MCF 10A (cell line): ENCODE measurements at regions of chr12 and their contacts with region 1.

Region 1: GRCh38 chr12:112937741-112938719 is at the start of gene OAS3:
- DNase-seq: peak; percentile 79
- H3K4me3 Mint-ChIP-seq: peak within 1 kb of the TSS; percentile 79
- H3K27ac Mint-ChIP-seq: peak within 1 kb of the TSS; percentile 62
- H3K4me1 Mint-ChIP-seq: peaks cover 33% of the 10 kb centered on the region
- H3K27me3 Mint-ChIP-seq: no peaks in the 10 kb centered on the region
- CTCF ChIP-seq: no peak
- total RNA-seq, gene OAS3: 5.7 and 6.5 TPM in 2 replicates

Region 2: GRCh38 chr12:112900299-112901145 is 37.5 kb before region 1 on chr12:
- CTCF ChIA-PET with region 1: interaction called, 10 read pairs
- POLR2A ChIA-PET with region 1: interaction called, 74 read pairs
- intact Hi-C with region 1: loop called (anchors 5 kb)
- DNase-seq: peak; percentile 74
- H3K4me3 Mint-ChIP-seq: no peak overlapping the region
- H3K27ac Mint-ChIP-seq: no peak overlapping the region
- H3K4me1 Mint-ChIP-seq: peaks cover 33% of the 10 kb centered on the region
- H3K27me3 Mint-ChIP-seq: peaks cover 28% of the 10 kb centered on the region
- CTCF ChIP-seq: peak; percentile 64

Region 3: DNA sequence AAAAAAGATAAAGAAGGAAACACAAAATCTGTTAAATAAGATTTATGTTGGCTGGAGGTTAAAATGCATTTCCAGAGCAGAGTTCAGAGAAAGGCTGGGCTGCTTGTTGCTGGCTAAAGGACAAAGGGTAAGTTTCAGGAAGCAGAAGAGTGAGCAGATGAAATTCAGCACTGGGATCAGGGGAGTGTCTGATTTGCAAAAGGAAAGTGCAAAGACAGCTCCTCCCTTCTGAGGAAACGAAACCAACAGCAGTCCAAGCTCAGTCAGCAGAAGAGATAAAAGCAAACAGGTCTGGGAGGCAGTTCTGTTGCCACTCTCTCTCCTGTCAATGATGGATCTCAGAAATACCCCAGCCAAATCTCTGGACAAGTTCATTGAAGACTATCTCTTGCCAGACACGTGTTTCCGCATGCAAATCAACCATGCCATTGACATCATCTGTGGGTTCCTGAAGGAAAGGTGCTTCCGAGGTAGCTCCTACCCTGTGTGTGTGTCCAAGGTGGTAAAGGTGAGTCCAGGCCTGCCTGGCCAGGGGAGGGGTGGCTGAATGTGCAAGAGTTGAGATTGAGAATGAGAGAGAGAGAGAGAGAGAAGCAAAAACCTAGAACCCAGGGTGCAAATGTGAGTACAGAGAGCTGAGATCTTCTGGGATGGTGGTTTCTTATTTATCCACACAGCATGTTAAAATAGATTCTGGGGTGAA is 31.2 kb before region 1 on chr12 and contains the start of gene OAS1:
- CTCF ChIA-PET with region 1: interaction called, 7 read pairs
- POLR2A ChIA-PET with region 1: interaction called, 74 read pairs
- intact Hi-C with region 1: loop called (anchors 5 kb)
- DNase-seq: peak; percentile 74
- H3K4me3 Mint-ChIP-seq: peak within 1 kb of the TSS; percentile 73
- H3K27ac Mint-ChIP-seq: peak within 1 kb of the TSS; percentile 72
- H3K4me1 Mint-ChIP-seq: peaks cover 44% of the 10 kb centered on the region
- H3K27me3 Mint-ChIP-seq: no peaks in the 10 kb centered on the region
- CTCF ChIP-seq: no peak
- total RNA-seq, gene OAS1: 1.3 and 1.5 TPM in 2 replicates

Region 4: GRCh38 chr12:112916270-112916669 is 21.8 kb before region 1 on chr12:
- CTCF ChIA-PET with region 1: interaction called, 5 read pairs
- POLR2A ChIA-PET with region 1: interaction called, 47 read pairs
- intact Hi-C with region 1: loop called (anchors 1 kb)
- DNase-seq: peak; percentile 99
- H3K4me3 Mint-ChIP-seq: no peak overlapping the region
- H3K27ac Mint-ChIP-seq: peak overlapping the region; percentile 60
- H3K4me1 Mint-ChIP-seq: peaks cover 13% of the 10 kb centered on the region
- H3K27me3 Mint-ChIP-seq: no peaks in the 10 kb centered on the region
- CTCF ChIP-seq: no peak

Region 5: DNA sequence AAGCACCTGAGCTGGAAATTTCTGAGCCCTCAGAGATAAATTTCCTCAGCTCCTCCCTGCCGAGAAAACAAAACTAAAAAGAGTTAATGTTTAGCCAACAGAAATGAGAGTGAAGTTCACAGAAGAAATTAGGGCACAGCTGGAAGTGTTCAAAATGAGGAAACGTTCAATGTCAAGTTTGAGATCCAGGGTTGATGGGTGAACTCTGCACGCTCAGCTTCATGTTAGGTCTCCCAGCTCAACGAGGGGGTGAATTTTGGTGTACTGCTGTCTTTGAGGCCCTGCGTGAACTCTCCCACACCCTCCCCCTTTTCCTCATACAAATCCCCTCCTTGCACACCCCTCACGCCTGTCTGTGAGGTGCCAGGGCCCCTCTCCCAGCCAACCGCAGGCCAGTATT is 13.0 kb before region 1 on chr12:
- CTCF ChIA-PET with region 1: interaction called, 4 read pairs
- POLR2A ChIA-PET with region 1: interaction called, 4 read pairs
- intact Hi-C with region 1: loop called (anchors 1 kb)
- DNase-seq: no peak
- H3K4me3 Mint-ChIP-seq: no peak overlapping the region
- H3K27ac Mint-ChIP-seq: no peak overlapping the region
- H3K4me1 Mint-ChIP-seq: no peaks in the 10 kb centered on the region
- H3K27me3 Mint-ChIP-seq: no peaks in the 10 kb centered on the region
- CTCF ChIP-seq: no peak

Region 6: DNA sequence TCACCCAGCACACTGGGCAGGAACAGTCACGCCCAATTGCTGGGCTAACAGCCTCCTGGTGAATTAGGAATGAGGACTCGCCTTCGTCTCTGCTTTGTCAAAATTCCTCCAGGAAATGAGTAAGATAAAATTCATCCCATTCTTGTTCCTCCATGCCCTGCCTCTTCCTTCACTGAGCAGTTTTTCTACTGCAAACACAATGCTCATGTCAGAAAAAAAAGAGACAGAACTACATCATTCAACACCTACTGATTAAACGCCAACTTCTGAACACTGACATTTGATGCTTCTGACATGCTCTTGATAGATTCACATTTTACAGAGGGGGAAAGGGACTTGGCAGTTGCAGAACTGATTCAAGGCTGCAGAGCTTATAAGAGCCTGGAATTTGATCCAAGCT is 81.0 kb after region 1 on chr12:
- CTCF ChIA-PET with region 1: no interaction called
- POLR2A ChIA-PET with region 1: no interaction called
- intact Hi-C with region 1: no loop called
- DNase-seq: peak; percentile 39
- H3K4me3 Mint-ChIP-seq: no peak overlapping the region
- H3K27ac Mint-ChIP-seq: no peak overlapping the region
- H3K4me1 Mint-ChIP-seq: peaks cover 17% of the 10 kb centered on the region
- H3K27me3 Mint-ChIP-seq: no peaks in the 10 kb centered on the region
- CTCF ChIP-seq: no peak

Region 7: GRCh38 chr12:113135178-113136127 is 197.4 kb after region 1 on chr12 and contains the start of gene RASAL1:
- CTCF ChIA-PET with region 1: no interaction called
- POLR2A ChIA-PET with region 1: no interaction called
- intact Hi-C with region 1: no loop called
- DNase-seq: peak; percentile 52
- H3K4me3 Mint-ChIP-seq: peak within 1 kb of the TSS; percentile 55
- H3K27ac Mint-ChIP-seq: no peak within 1 kb of the TSS
- H3K4me1 Mint-ChIP-seq: peaks cover 5% of the 10 kb centered on the region
- H3K27me3 Mint-ChIP-seq: no peaks in the 10 kb centered on the region
- CTCF ChIP-seq: peak; percentile 47
- total RNA-seq, gene RASAL1: not detected in 2 replicates